A673 (cell line): ENCODE measurements at regions of chr3 and their contacts with region 1.

Region 1: GRCh38 chr3:124707656-124708062 is 22.6 kb upstream of the UMPS start:
- DNase-seq: peak; percentile 96
- H3K4me3 ChIP-seq: no peak overlapping the region
- H3K27ac ChIP-seq: peak overlapping the region; percentile 95
- H3K4me1 ChIP-seq: peaks cover 44% of the 10 kb centered on the region
- H3K27me3 ChIP-seq: no peaks in the 10 kb centered on the region
- CTCF ChIP-seq: no peak

Region 2: GRCh38 chr3:125108833-125109535 is 401.3 kb after region 1 on chr3:
- CTCF ChIA-PET with region 1: no interaction called
- POLR2A ChIA-PET with region 1: interaction called, 23 read pairs
- intact Hi-C with region 1: no loop called
- DNase-seq: no peak
- H3K4me3 ChIP-seq: no peak overlapping the region
- H3K27ac ChIP-seq: no peak overlapping the region
- H3K4me1 ChIP-seq: peaks cover 10% of the 10 kb centered on the region
- H3K27me3 ChIP-seq: no peaks in the 10 kb centered on the region
- CTCF ChIP-seq: no peak

Region 3: GRCh38 chr3:126293370-126294082 is 1585.9 kb after region 1 on chr3:
- CTCF ChIA-PET with region 1: no interaction called
- POLR2A ChIA-PET with region 1: no interaction called
- intact Hi-C with region 1: loop called (anchors 5 kb)
- DNase-seq: peak; percentile 62
- H3K4me3 ChIP-seq: no peak overlapping the region
- H3K27ac ChIP-seq: peak overlapping the region; percentile 99
- H3K4me1 ChIP-seq: peaks cover 51% of the 10 kb centered on the region
- H3K27me3 ChIP-seq: no peaks in the 10 kb centered on the region
- CTCF ChIP-seq: no peak